ENCODE measurements at regions of chr3 and their contacts with region 1.

Region 1: DNA sequence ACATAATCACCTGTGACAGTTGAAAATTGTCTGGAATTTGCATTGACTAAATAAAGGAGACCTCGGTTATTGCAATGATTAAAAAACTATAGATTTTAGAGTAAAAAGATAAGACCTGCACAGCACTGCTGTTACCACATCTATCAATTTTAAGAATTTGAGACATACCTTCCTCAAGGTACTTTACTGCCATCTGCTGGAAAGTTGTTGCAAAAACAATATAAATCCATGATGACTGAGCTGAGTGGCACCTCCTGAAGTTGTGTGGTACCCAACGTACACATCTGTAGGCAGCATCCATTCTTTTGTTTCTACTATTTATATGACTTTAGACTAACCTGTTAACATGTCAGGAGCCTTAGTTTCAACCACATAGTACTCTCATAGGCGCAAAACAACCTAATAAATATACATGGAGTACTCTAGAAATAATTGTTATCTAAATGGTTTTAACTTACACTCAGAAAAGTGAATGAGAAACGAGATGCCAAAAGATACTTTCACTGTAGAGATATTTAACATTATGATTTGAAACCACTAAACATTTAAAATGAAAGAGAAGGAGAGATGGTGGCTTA is 106.7 kb downstream of the GHSR start:
- DNase-seq: no peak
- H3K4me3 ChIP-seq: no peak overlapping the region
- H3K27ac ChIP-seq: no peak overlapping the region
- H3K4me1 ChIP-seq: no peaks in the 10 kb centered on the region
- H3K27me3 ChIP-seq: no peaks in the 10 kb centered on the region
- CTCF ChIP-seq: peak; percentile 68 to 82 (median 76)
- EP300 ChIP-seq: no peak
- POLR2A ChIP-seq: no peak

Region 2: GRCh38 chr3:171142985-171143384 is 1198.6 kb before region 1 on chr3:
- intact Hi-C with region 1: no loop called
- DNase-seq: no peak
- H3K4me3 ChIP-seq: no peak overlapping the region
- H3K27ac ChIP-seq: no peak overlapping the region
- H3K4me1 ChIP-seq: no peaks in the 10 kb centered on the region
- H3K27me3 ChIP-seq: no peaks in the 10 kb centered on the region
- CTCF ChIP-seq: no peak
- EP300 ChIP-seq: no peak
- POLR2A ChIP-seq: no peak

Region 3: GRCh38 chr3:171646357-171647133 is 695.0 kb before region 1 on chr3:
- intact Hi-C with region 1: loop called in 3 of 4 experiments (anchors 5 to 10 kb)
- DNase-seq: no peak
- H3K4me3 ChIP-seq: no peak overlapping the region
- H3K27ac ChIP-seq: peak overlapping the region; percentile 36 to 69
- H3K4me1 ChIP-seq: peaks cover 5% of the 10 kb centered on the region
- H3K27me3 ChIP-seq: no peaks in the 10 kb centered on the region
- CTCF ChIP-seq: peak; percentile 12 to 74 (median 68)
- EP300 ChIP-seq: no peak
- POLR2A ChIP-seq: no peak

Region 4: DNA sequence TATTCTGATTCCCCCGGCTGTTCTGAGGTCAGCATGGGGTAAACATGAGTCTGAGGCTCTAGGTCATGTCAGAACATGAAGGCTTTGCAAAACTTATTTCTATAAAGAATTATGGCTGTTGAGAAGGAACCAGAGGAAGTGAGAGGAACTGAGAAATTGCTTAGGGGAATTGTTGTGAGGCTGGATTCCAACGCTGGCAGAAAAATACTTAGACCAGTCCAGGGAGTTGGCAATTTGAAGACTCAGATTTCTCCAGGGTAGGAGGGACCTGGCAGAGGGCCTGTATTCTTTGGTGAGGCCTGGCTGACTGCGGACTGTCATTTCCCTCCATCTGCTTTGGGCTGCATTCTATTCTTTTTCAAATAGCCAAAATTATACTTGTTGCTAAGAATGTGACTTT is 686.8 kb before region 1 on chr3:
- intact Hi-C with region 1: loop called in 1 of 4 experiments (anchors 5 kb)
- DNase-seq: peak; percentile 55 to 79 (median 59)
- H3K4me3 ChIP-seq: no peak overlapping the region
- H3K27ac ChIP-seq: no peak overlapping the region
- H3K4me1 ChIP-seq: peaks cover 6% of the 10 kb centered on the region
- H3K27me3 ChIP-seq: no peaks in the 10 kb centered on the region
- CTCF ChIP-seq: no peak
- EP300 ChIP-seq: no peak
- POLR2A ChIP-seq: no peak

Region 5: DNA sequence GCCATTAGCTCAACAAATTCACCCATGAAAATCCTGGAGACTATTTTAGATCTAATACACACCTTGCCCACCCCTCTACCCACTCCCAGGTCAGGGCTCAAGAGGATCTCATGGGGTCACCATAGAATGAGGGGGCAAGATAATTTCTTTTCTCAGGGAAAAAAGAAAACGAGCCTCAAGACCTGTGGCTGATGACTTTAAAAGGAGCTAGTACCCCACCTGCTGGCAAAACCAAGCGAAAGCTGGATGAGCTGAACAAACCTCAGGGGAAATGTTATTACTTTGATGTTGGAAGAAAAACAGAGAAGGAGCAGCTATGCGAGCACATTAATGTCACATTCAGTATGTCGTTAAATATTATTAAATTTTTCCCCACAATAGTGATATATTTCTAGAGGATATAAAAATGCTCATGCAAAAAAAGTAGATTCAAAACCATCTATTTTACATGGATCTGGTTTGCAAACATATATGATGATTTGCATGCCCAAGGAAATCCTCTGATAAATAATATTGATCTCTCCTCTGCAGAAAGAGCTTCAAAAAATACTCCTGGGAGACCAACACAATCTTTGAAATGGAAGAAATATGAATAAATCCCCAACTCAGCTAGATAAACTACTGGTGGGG is 569.0 kb before region 1 on chr3:
- intact Hi-C with region 1: loop called in 1 of 4 experiments (anchors 10 kb)
- DNase-seq: peak; percentile 59 to 79 (median 68)
- H3K4me3 ChIP-seq: no peak overlapping the region
- H3K27ac ChIP-seq: peak overlapping the region in 1 of 2 donors; percentile 76
- H3K4me1 ChIP-seq: peaks cover 7% of the 10 kb centered on the region
- H3K27me3 ChIP-seq: no peaks in the 10 kb centered on the region
- CTCF ChIP-seq: peak; percentile 57 to 66 (median 63)
- EP300 ChIP-seq: no peak
- POLR2A ChIP-seq: no peak

Region 6: DNA sequence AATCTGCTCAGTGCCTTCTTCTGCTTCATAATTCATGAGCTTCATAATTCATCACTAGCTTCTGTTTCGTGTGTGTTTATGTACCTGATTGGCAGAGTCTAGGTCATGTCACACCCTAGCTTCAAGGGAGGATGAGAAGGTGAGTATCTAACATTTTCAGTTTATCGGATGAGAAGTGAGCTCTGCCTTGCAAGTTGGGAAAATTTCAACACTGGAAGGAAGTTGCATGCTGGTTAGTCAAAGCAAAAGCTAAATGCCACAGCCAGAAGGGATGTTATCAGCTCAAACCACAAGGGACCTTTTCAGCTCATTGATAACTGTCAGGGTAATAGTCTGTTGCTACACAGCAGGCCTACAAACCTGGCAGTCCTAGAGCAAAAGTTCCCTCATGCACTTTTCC is 189.0 kb after region 1 on chr3:
- intact Hi-C with region 1: no loop called
- DNase-seq: no peak
- H3K4me3 ChIP-seq: no peak overlapping the region
- H3K27ac ChIP-seq: no peak overlapping the region
- H3K4me1 ChIP-seq: no peaks in the 10 kb centered on the region
- H3K27me3 ChIP-seq: no peaks in the 10 kb centered on the region
- CTCF ChIP-seq: no peak
- EP300 ChIP-seq: no peak
- POLR2A ChIP-seq: no peak

Region 7: GRCh38 chr3:173013187-173013832 is 671.7 kb after region 1 on chr3:
- intact Hi-C with region 1: no loop called
- DNase-seq: no peak
- H3K4me3 ChIP-seq: no peak overlapping the region
- H3K27ac ChIP-seq: no peak overlapping the region
- H3K4me1 ChIP-seq: no peaks in the 10 kb centered on the region
- H3K27me3 ChIP-seq: no peaks in the 10 kb centered on the region
- CTCF ChIP-seq: no peak
- EP300 ChIP-seq: no peak
- POLR2A ChIP-seq: no peak